Heart left ventricle (tissue), 16 donors: ENCODE measurements at regions of chr19 and their contacts with region 1.

Region 1: GRCh38 chr19:14479975-14480699 is 5.0 kb upstream of the PTGER1 start:
- DNase-seq: peak in 1 of 5 donors; percentile 76
- ATAC-seq: peak in 3 of 4 donors; percentile 33 to 40 (median 38)
- H3K4me3 ChIP-seq: no peak overlapping the region
- H3K27ac ChIP-seq: no peak overlapping the region
- H3K4me1 ChIP-seq: peaks cover 0 to 26% (median 11%) of the 10 kb centered on the region in 12 donors
- H3K27me3 ChIP-seq: peaks cover 0 to 9% (median 5%) of the 10 kb centered on the region in 9 donors
- CTCF ChIP-seq: peak; percentile 61 to 92 (median 70)
- POLR2A ChIP-seq: no peak

Region 2: DNA sequence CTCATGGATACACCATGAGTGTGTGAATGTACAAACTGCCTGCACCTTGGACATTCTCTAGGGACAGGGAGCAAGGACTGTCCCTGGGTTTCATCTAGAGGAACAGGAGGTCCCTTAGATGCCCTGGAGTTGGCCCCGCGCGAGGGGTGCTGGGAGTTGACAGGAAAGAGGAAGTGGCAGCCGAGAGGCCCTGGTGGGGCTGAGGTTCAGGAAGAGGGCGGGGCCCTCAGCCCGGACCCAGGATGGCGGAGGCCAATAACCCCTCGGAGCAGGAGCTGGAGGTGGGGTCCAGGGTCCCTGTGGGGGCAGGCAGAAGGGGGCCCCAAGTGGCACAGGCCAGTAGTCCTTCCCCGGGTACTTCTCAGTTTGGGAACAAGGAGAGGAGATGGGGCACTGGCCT is 40.1 kb before region 1 on chr19:
- intact Hi-C with region 1: loop called in 2 of 10 experiments (anchors 5 kb)
- DNase-seq: peak; percentile 75 to 91 (median 84)
- ATAC-seq: peak; percentile 32 to 72 (median 60)
- H3K4me3 ChIP-seq: peak overlapping the region in 9 of 12 donors; percentile 16 to 62 (median 30)
- H3K27ac ChIP-seq: peak overlapping the region in 11 of 12 donors; percentile 37 to 82 (median 62)
- H3K4me1 ChIP-seq: peaks cover 2 to 63% (median 48%) of the 10 kb centered on the region in 12 donors
- H3K27me3 ChIP-seq: no peaks in the 10 kb centered on the region
- CTCF ChIP-seq: no peak
- POLR2A ChIP-seq: no peak